Calu3 (cell line): ENCODE measurements at regions of chr11 and their contacts with region 1.

Region 1: GRCh38 chr11:62787005-62787759 is at the start of gene TMEM179B:
- DNase-seq: peak; percentile 98
- H3K4me3 Mint-ChIP-seq: peak within 1 kb of the TSS; percentile 96
- H3K27ac Mint-ChIP-seq: peak within 1 kb of the TSS; percentile 93
- H3K4me1 Mint-ChIP-seq: peaks cover 24% of the 10 kb centered on the region
- H3K27me3 Mint-ChIP-seq: no peaks in the 10 kb centered on the region
- CTCF ChIP-seq: peak; percentile 23
- total RNA-seq, gene TMEM179B: 65.6 and 72.3 TPM in 2 replicates

Region 2: GRCh38 chr11:62337303-62338181 is 449.6 kb before region 1 on chr11 and contains the start of gene ASRGL1:
- CTCF ChIA-PET with region 1: no interaction called
- intact Hi-C with region 1: no loop called
- DNase-seq: peak; percentile 94
- H3K4me3 Mint-ChIP-seq: peak within 1 kb of the TSS; percentile 80
- H3K27ac Mint-ChIP-seq: peak within 1 kb of the TSS; percentile 57
- H3K4me1 Mint-ChIP-seq: peaks cover 26% of the 10 kb centered on the region
- H3K27me3 Mint-ChIP-seq: peaks cover 25% of the 10 kb centered on the region
- CTCF ChIP-seq: no peak
- total RNA-seq, gene ASRGL1: 30.3 and 38.7 TPM in 2 replicates

Region 3: GRCh38 chr11:62665075-62665598 is 122.0 kb before region 1 on chr11 and contains the starts of genes C11orf98 and CSKMT:
- CTCF ChIA-PET with region 1: no interaction called
- intact Hi-C with region 1: no loop called
- DNase-seq: peak; percentile 96
- H3K4me3 Mint-ChIP-seq: peak within 1 kb of the TSS; percentile 91
- H3K27ac Mint-ChIP-seq: peak within 1 kb of the TSS; percentile 99
- H3K4me1 Mint-ChIP-seq: peaks cover 9% of the 10 kb centered on the region
- H3K27me3 Mint-ChIP-seq: no peaks in the 10 kb centered on the region
- CTCF ChIP-seq: no peak
- total RNA-seq, gene C11orf98: 61.7 and 67.4 TPM in 2 replicates
- total RNA-seq, gene CSKMT: 17.7 and 23.1 TPM in 2 replicates

Region 4: DNA sequence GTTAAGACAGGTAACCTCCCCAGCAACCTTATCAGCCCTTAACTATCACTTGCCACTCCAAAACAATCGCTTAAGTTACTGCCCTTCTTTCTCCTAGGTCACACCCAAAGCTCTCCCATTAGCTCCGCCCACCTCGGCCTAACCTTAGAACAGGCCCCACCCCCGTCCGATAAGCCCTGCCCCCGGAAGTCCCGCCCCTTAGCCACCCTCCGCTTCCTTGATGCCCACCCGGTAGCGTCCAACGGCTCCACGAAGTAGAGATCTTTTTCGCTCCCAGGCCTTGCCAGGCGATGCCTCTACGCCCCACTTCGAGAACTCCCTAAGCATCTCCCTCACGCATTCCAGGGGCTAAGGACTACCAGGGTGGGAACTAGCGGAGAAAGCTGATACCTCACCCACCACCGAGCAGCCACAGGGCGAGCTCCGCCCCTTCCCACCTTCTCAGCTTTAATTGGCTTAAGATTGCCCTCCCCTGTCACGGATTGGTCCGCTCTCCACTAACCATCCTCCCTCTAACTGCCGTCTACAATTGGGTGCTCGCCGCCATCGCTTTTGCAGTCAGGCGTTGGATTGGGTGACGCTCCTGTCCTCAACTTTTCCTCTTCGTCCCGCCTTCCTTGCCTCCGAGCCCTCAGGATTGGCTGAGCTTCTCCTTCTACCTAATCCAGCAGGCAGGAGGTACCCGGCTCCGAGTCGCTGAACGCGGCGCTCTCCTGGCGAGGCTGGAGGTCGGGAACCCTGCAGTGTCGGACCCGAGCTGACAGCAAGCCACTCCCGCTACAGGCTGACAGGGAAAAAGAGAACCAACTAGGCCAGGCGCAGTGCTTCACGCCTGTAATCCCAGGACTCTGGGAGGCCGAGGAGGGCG is 33.2 kb before region 1 on chr11 and contains the start of gene ZBTB3:
- CTCF ChIA-PET with region 1: interaction called, 16 read pairs
- intact Hi-C with region 1: no loop called
- DNase-seq: peak; percentile 96
- H3K4me3 Mint-ChIP-seq: peak within 1 kb of the TSS; percentile 92
- H3K27ac Mint-ChIP-seq: peak within 1 kb of the TSS; percentile 93
- H3K4me1 Mint-ChIP-seq: no peaks in the 10 kb centered on the region
- H3K27me3 Mint-ChIP-seq: no peaks in the 10 kb centered on the region
- CTCF ChIP-seq: no peak
- total RNA-seq, gene ZBTB3: 9.7 and 10.6 TPM in 2 replicates

Region 5: DNA sequence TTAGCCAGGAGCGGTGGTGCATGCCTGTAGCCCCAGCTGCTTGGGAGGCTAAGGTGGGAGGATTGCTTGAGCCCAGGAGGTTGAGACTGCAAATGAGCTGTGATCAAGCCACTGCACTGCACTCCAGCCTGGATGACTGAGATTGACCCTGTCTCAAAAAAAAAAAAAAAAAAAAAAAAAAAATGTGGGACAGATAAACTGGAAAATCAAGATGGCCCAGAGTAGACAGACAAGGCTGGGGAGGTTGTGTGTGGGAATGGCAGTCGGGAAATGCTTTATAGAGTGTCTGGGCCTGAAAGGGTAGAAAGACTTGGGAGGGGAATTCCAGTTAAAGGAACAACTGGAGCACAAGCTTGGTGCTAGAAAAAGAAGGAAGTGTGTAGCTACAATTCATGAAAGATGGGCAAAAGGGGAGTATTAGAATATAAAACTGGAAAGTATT is 70.4 kb after region 1 on chr11:
- CTCF ChIA-PET with region 1: interaction called, 11 read pairs
- intact Hi-C with region 1: loop called (anchors 1 kb)
- DNase-seq: no peak
- H3K4me3 Mint-ChIP-seq: peak overlapping the region; percentile 61
- H3K27ac Mint-ChIP-seq: peak overlapping the region; percentile 98
- H3K4me1 Mint-ChIP-seq: peaks cover 37% of the 10 kb centered on the region
- H3K27me3 Mint-ChIP-seq: no peaks in the 10 kb centered on the region
- CTCF ChIP-seq: no peak

Region 6: DNA sequence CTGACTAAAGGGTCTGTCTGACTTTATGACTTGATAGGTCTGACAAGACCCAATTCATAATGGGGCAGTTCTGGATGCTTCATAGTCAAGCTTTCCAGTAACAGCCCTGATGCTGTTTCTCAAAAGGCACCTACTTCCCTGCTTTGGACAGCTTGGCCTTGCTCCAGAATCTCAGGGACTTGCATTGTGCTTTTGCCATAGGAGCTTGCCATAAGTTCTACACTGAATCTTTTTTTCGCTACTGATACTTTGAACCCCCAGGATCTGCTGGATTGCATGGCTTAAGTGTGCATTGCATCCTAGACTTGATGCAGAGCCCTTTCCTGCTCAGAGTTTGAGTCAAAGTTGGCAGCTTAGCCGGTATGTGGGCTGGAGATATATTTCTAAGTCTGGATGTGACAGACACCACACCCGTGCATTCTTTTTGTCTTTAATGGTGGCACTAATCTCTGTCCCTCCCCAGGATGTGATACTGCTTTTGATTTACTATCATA is 76.6 kb after region 1 on chr11:
- CTCF ChIA-PET with region 1: interaction called, 11 read pairs
- intact Hi-C with region 1: loop called (anchors 1 kb)
- DNase-seq: no peak
- H3K4me3 Mint-ChIP-seq: no peak overlapping the region
- H3K27ac Mint-ChIP-seq: no peak overlapping the region
- H3K4me1 Mint-ChIP-seq: peaks cover 14% of the 10 kb centered on the region
- H3K27me3 Mint-ChIP-seq: no peaks in the 10 kb centered on the region
- CTCF ChIP-seq: no peak

Region 7: GRCh38 chr11:62880803-62881578 is 93.8 kb after region 1 on chr11 and contains the start of gene SLC3A2:
- CTCF ChIA-PET with region 1: interaction called, 8 read pairs
- intact Hi-C with region 1: loop called (anchors 5 kb)
- DNase-seq: peak; percentile 88
- H3K4me3 Mint-ChIP-seq: peak within 1 kb of the TSS; percentile 100
- H3K27ac Mint-ChIP-seq: peak within 1 kb of the TSS; percentile 100
- H3K4me1 Mint-ChIP-seq: peaks cover 58% of the 10 kb centered on the region
- H3K27me3 Mint-ChIP-seq: peaks cover 9% of the 10 kb centered on the region
- CTCF ChIP-seq: peak; percentile 80
- total RNA-seq, gene SLC3A2: 410 and 444 TPM in 2 replicates

Region 8: DNA sequence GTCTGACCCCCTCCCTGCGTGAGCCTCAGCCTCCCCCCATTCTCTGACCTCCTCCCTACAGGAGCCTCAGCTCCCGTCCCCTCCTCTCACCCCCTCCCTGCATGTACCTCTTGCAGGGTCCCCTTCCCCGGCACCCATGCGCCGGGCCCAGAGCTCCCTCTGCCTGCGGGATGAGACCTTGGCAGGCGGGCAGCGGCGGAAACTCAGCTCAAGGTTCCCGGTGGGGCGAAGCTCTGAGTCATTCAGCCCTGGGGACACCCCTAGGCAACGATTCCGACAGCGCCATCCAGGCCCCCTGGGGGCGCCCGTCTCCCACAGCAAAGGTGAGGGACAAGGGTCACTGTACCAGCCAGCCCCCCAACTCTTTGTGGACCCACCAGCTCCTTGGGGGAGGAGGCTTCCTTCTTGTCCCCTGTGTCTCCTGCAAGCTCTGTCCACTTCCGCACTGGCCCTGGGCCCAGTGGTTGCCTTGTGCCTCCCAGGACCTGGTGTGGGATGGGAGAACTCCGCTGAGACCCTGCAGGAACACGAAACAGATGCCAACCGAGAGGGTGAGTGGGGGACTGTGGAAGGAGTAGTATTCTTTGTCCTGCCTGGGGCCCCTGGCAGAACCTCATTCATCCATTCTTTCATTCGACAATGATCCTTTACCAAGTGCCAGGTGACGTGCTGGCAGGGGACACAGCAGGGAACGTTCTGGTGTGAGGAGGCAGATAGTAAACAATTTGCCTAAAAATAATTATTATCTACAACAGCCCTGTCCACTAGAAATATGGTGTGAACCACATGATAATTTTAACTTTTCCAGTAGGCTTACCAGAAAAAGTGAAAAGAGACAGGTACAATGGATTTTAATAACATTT is 1568.1 kb after region 1 on chr11:
- CTCF ChIA-PET with region 1: no interaction called
- intact Hi-C with region 1: no loop called
- DNase-seq: peak; percentile 93
- H3K4me3 Mint-ChIP-seq: peak overlapping the region; percentile 61
- H3K27ac Mint-ChIP-seq: peak overlapping the region; percentile 82
- H3K4me1 Mint-ChIP-seq: peaks cover 28% of the 10 kb centered on the region
- H3K27me3 Mint-ChIP-seq: no peaks in the 10 kb centered on the region
- CTCF ChIP-seq: peak; percentile 71